GM10248 (cell line): ENCODE measurements at regions of chr13 and their contacts with region 1.

Region 1: GRCh38 chr13:114065141-114065925 is 67.1 kb downstream of the RASA3 start:
- DNase-seq: peak; percentile 61
- CTCF ChIP-seq: no peak

Region 2: DNA sequence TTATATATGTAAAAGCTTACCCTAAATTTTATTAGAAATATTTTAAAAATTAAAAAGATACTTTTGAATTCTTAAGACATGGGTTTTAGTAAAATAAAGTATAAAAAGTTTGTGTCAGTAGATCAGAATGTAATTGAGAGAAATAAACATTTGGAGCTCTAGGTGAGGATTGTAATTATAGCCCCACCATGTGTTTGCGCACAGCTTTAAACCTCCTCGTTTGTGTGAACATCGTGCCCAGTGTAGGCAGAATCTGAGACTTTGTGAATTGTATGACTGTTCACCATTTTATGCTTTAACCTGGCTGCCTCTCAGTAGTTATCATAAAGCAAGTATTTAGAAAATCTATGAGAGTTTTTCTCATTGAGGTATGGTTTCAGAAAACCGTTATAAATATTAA is 826.8 kb before region 1 on chr13:
- CTCF ChIA-PET with region 1: no interaction called
- POLR2A ChIA-PET with region 1: no interaction called
- DNase-seq: no peak
- CTCF ChIP-seq: no peak

Region 3: GRCh38 chr13:114096031-114096485 is 30.7 kb after region 1 on chr13:
- CTCF ChIA-PET with region 1: interaction called, 12 read pairs
- POLR2A ChIA-PET with region 1: no interaction called
- DNase-seq: no peak
- CTCF ChIP-seq: no peak

Region 4: GRCh38 chr13:114248011-114248410 is 182.7 kb after region 1 on chr13:
- CTCF ChIA-PET with region 1: no interaction called
- POLR2A ChIA-PET with region 1: no interaction called
- DNase-seq: no peak
- CTCF ChIP-seq: no peak